Mammary epithelial cell (primary cell): ENCODE measurements at regions of chr2 and their contacts with region 1.

Region 1: DNA sequence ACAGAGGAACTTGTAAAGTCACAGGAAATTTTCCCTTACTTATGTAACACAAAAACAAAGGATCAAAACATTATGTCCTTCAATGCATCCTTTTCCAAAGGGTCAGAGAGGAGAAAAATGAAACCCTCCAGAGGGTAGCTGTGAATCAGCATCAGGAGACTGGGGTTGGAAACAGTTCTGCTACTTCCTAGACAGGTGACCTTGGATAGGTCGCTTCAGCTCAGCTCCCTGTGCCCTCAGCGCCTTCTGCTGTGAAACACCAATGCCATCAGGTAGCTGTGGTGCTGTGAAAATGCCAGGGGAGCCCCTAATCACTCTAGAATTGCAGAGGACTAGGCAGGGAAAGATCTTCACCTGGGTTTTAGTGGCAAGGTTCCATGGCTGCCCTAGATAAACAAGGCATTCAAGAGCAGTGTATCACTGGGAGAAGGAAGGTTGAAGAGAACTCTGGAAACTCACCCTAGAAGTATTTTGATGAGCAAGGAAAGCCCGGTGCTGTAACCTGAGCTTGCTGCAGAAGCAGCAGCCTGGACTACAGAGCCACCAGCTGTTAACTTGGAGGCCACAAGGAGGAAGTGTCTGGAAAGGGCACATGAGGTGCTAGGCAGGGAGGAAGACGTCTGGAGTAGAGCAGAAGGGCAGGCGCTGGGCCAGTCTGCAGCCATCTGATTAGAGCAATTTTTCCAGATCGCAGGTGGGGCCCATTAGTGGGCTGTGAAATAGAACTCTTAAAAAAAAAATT is 100.7 kb upstream of the MCFD2 start:
- DNase-seq: peak; percentile 80
- H3K4me3 ChIP-seq: no peak overlapping the region
- H3K27ac ChIP-seq: no peak overlapping the region
- H3K4me1 ChIP-seq: peaks cover 5% of the 10 kb centered on the region
- H3K27me3 ChIP-seq: no peaks in the 10 kb centered on the region
- CTCF ChIP-seq: no peak

Region 2: DNA sequence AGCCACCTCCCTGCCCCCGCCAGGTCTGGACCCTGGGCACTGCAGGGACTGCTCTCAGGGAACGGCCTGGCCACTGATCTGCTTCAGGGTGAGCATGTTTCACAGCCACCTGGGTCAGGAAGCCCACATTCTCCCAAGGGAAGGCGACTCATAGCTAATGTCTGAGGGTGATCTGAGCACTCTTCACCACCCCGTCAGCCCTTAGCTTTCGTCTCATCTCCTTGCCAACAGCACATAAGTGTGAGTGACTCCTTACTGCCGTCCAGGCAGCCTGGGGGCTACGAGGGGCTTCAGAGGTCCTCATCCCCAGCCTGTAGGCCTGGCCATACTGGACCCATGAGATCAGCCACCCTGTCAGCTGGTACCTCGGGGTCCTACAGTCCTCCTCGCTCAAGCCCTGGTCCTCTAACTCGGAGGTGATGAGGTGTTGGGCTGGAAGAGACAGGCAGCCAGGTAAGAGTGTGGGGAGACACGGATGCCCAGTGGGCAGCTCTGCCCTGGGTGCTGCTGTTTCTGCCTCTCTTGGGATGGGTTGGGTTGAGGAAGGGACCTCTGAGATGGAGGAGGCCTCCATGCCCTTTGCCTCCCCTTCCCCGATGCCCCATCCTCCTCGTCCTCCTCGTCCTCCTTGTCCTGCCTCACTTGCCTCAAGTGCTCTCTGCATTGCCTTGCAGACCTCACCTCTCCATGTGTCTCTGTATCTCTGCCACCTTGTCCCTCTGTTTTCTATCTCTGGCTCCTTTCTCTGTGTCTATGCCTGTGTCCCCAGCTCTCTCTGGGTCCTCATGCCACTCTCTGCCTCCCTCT is 188.5 kb before region 1 on chr2:
- CTCF ChIA-PET with region 1: no interaction called
- dilution Hi-C with region 1: no loop called
- in situ Hi-C with region 1: no loop called
- intact Hi-C with region 1: no loop called
- DNase-seq: no peak
- H3K4me3 ChIP-seq: no peak overlapping the region
- H3K27ac ChIP-seq: no peak overlapping the region
- H3K4me1 ChIP-seq: peaks cover 8% of the 10 kb centered on the region
- H3K27me3 ChIP-seq: no peaks in the 10 kb centered on the region
- CTCF ChIP-seq: no peak

Region 3: DNA sequence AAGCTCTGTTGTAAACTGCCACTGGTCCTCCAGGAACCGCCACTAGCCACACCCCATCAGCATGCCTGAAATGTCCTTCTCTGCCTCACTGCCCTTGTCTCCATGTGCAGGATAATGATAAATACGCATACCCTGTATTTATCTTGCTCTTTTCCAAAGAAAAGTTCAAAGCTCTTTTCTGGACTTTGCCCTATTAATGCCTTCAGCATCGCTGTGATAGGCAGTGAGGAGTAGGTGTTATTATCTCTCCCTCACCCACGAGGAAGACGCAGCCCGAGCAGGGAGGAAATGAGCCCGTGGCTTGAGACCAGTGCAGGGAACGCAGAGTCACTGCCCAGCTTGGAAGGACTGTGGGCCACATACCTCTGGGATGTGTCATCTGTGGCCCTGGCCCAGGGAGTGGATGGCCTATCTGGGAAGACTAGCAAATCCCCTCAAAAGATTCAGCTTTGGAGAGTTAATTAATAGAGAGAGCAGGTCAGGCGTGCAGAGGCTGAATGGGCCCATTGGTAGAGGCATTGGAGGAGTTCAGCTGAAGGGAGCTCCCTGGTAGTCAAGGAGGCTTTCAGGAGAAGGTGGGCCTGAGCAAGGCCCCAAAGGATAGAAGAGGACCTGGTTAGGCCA is 61.3 kb before region 1 on chr2:
- CTCF ChIA-PET with region 1: no interaction called
- dilution Hi-C with region 1: no loop called
- in situ Hi-C with region 1: no loop called
- intact Hi-C with region 1: no loop called
- DNase-seq: peak; percentile 51
- H3K4me3 ChIP-seq: no peak overlapping the region
- H3K27ac ChIP-seq: peak overlapping the region; percentile 44
- H3K4me1 ChIP-seq: peaks cover 13% of the 10 kb centered on the region
- H3K27me3 ChIP-seq: no peaks in the 10 kb centered on the region
- CTCF ChIP-seq: no peak

Region 4: DNA sequence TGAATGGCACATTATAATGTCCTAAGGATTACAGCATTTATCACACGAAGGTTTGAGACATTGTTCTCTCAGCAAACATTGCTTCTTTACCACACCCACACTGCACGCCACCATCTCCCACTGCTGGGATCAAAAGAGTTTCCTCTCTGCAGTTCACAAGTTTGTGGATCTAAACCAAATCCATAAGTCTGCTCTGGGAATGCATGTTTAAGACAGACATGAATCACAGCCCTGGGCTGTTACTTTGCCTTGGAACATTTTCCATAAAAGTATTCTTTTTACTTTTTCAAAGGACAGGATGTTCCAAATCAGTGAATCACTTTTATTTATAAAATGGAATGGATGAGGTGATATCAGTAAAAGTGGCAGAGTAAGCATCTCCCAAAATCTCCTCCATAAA is 102.7 kb after region 1 on chr2:
- CTCF ChIA-PET with region 1: no interaction called
- dilution Hi-C with region 1: no loop called
- in situ Hi-C with region 1: no loop called
- intact Hi-C with region 1: loop called (anchors 5 kb)
- DNase-seq: peak; percentile 25
- H3K4me3 ChIP-seq: no peak overlapping the region
- H3K27ac ChIP-seq: no peak overlapping the region
- H3K4me1 ChIP-seq: peaks cover 24% of the 10 kb centered on the region
- H3K27me3 ChIP-seq: no peaks in the 10 kb centered on the region
- CTCF ChIP-seq: no peak

Region 5: DNA sequence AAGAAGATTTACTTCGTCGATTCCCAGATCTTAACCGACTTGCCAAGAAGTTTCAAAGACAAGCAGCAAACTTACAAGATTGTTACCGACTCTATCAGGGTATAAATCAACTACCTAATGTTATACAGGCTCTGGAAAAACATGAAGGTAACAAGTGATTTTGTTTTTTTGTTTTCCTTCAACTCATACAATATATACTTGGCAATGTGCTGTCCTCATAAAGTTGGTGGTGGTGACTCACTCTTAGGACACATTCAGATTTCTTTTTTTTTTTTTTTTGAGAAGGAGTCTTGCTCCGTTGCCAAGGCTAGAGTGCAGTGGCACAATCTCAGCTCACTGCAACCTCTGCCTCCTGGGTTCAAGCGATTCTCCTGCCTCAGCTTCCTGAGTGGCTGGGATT is 413.5 kb after region 1 on chr2:
- CTCF ChIA-PET with region 1: no interaction called
- dilution Hi-C with region 1: no loop called
- in situ Hi-C with region 1: no loop called
- intact Hi-C with region 1: no loop called
- DNase-seq: peak; percentile 49
- H3K4me3 ChIP-seq: no peak overlapping the region
- H3K27ac ChIP-seq: no peak overlapping the region
- H3K4me1 ChIP-seq: no peaks in the 10 kb centered on the region
- H3K27me3 ChIP-seq: no peaks in the 10 kb centered on the region
- CTCF ChIP-seq: no peak